B cell (primary cell): ENCODE measurements at regions of chr22 and their contacts with region 1.

Region 1: GRCh38 chr22:50525390-50526068 is at the start of gene SCO2:
- DNase-seq: peak; percentile 98
- ATAC-seq: peak; percentile 54
- H3K4me3 ChIP-seq: peak within 1 kb of the TSS; percentile 4 to 82 (median 69)
- H3K4me3 Mint-ChIP-seq: peak within 1 kb of the TSS; percentile 90
- H3K27ac ChIP-seq: peak within 1 kb of the TSS; percentile 83 to 90
- H3K27ac Mint-ChIP-seq: peak within 1 kb of the TSS; percentile 91
- H3K4me1 ChIP-seq: peaks cover 16 to 52% of the 10 kb centered on the region in 2 donors
- H3K4me1 Mint-ChIP-seq: peaks cover 34% of the 10 kb centered on the region
- H3K27me3 ChIP-seq: no peaks in the 10 kb centered on the region
- H3K27me3 Mint-ChIP-seq: no peaks in the 10 kb centered on the region
- CTCF ChIP-seq: no peak
- total RNA-seq, gene SCO2: 1.1 TPM in 2 replicates

Region 2: DNA sequence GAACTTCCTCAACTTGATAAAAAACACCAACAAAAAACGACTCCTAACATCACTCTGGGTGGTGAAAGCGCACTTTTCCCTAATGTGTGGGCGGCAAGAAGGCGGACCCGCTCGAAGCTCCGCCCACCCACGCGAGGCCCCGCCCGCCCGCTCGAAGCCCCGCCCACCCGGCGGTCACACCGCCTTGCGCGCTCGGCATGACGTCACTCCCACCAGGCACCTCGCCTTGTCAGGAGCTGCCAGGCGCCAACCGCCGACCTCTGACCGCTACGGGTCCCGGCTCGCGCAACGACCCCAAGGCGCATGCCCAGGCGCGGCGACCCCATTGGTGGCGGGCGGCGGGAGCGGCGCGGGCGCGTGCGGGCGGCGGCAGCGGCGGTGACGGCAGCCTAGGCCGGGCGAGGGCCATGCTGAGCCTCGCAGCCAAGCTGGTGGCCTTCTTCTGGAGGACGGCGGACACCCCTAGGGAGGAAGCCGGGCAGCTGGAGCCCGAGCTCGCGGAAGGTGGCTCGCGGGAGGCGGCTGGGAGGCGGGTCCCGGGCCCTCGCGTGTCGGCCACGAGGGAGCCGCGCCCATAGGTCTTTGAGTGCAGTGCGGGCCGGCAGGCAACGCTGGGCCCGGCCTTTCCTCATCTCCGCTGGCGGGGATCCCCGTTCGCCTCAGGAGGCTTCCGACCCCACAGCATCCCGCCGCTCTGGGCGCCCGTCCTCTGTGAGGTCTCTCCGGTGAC is 435.7 kb before region 1 on chr22 and contains the start of gene MOV10L1:
- CTCF ChIA-PET with region 1: no interaction called
- POLR2A ChIA-PET with region 1: no interaction called
- intact Hi-C with region 1: no loop called
- DNase-seq: no peak
- ATAC-seq: no peak
- H3K4me3 ChIP-seq: no peak within 1 kb of the TSS
- H3K4me3 Mint-ChIP-seq: no peak within 1 kb of the TSS
- H3K27ac ChIP-seq: no peak within 1 kb of the TSS
- H3K27ac Mint-ChIP-seq: no peak within 1 kb of the TSS
- H3K4me1 ChIP-seq: no peaks in the 10 kb centered on the region
- H3K4me1 Mint-ChIP-seq: peaks cover 3% of the 10 kb centered on the region
- H3K27me3 ChIP-seq: peaks cover 0 to 21% (median 3%) of the 10 kb centered on the region in 4 experiments
- H3K27me3 Mint-ChIP-seq: peaks cover 15% of the 10 kb centered on the region
- CTCF ChIP-seq: no peak
- total RNA-seq, gene MOV10L1: not detected in 2 replicates

Region 3: DNA sequence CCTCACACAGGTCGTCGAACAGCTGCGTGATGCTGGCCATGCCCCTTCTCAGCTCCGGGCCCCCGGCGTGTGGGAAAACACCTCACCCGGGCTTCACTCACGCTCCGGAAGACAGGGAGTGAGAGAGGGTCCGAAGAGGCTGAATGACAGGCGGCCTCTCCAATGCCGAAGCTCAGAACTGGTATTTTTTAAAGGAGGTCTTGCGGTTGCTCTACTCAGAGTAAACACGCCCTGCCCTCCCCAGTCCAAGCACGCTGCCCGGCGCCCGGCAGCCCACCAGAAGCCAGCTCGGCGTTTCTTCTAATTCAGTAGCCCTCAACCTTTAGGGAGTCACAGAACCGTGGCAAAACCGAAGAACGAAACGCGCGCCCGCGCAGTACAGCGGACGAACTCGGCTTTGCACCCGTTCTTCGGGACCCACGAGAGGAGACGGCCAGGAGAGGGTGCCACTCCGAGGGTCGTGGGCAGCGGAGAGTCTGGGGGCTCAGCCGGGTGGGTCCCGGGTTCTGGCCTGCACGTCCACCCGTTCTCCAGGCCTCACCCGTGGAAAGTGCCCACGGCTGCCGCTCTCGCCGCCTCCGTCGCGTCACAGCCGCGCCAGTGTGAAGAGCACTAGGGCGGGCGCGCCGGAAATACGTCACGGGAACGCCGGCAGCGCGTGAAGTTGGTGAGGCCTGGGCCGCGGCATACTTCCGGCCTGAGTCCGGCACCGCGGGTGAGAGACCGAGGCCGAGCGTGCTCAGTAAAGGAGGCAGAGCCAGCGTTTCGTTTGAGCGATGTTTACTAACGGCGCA is 280.9 kb before region 1 on chr22 and contains the start of gene TUBGCP6:
- CTCF ChIA-PET with region 1: interaction called, 18 read pairs
- POLR2A ChIA-PET with region 1: interaction called, 4 read pairs
- intact Hi-C with region 1: loop called (anchors 1 kb)
- DNase-seq: peak; percentile 96
- ATAC-seq: peak; percentile 81
- H3K4me3 ChIP-seq: peak within 1 kb of the TSS; percentile 65 to 99 (median 90)
- H3K4me3 Mint-ChIP-seq: peak within 1 kb of the TSS; percentile 96
- H3K27ac ChIP-seq: peak within 1 kb of the TSS; percentile 91 to 96
- H3K27ac Mint-ChIP-seq: peak within 1 kb of the TSS; percentile 99
- H3K4me1 ChIP-seq: peaks cover 33 to 66% of the 10 kb centered on the region in 2 donors
- H3K4me1 Mint-ChIP-seq: peaks cover 40% of the 10 kb centered on the region
- H3K27me3 ChIP-seq: no peaks in the 10 kb centered on the region
- H3K27me3 Mint-ChIP-seq: no peaks in the 10 kb centered on the region
- CTCF ChIP-seq: no peak
- total RNA-seq, gene TUBGCP6: 137 and 139 TPM in 2 replicates

Region 4: DNA sequence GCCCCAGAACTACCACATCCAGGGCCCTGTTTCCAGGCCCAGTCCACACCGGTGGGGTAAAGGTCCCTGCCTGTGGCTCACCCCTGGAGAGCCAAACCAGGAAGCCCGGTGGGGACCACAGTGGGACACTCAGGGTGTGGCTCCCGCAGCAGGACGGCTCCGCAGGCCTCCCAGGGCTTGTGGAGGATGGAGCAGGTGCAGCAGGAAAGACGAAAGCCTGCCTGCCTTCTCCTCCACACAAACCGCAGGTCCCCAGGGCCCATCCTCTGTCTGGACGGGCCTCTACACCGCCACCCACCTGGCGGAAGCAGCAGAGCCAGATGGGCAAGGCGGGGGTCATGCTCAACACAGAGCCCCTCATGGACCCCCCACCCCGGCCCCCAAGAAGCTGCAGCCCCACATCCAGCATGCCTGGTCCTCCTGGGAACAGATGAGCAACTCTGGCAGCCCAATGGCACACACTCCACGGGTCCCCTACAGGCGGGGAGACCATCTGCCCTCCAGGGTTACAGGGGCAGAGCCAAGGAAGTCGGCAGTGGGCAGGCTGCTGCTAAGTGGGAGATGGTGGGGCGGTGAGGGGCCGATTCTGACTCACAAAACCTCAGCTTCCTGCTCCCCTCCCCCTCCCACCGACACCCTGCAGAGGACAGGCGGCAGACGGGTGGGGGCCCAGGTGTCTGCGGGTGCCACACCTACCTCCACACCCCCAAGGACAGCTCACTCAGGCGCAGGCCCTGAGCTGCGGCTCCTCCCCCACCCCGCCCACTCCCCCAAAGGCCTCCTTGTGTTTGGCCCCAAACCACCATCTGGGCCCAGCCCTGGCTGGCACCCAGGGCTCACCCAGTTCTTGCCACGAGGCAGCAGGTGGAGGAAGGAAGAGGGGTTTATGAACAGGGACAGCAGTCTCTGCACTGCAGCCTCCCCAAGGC is 55.9 kb before region 1 on chr22:
- CTCF ChIA-PET with region 1: interaction called, 20 read pairs
- POLR2A ChIA-PET with region 1: interaction called, 22 read pairs
- intact Hi-C with region 1: loop called (anchors 5 kb)
- DNase-seq: peak; percentile 96
- ATAC-seq: peak; percentile 79
- H3K4me3 ChIP-seq: peak overlapping the region in 4 of 5 experiments; percentile 1 to 39 (median 29)
- H3K4me3 Mint-ChIP-seq: peak overlapping the region; percentile 83
- H3K27ac ChIP-seq: peak overlapping the region; percentile 69 to 90
- H3K27ac Mint-ChIP-seq: peak overlapping the region; percentile 96
- H3K4me1 ChIP-seq: peaks cover 60 to 66% of the 10 kb centered on the region in 2 donors
- H3K4me1 Mint-ChIP-seq: peaks cover 69% of the 10 kb centered on the region
- H3K27me3 ChIP-seq: no peaks in the 10 kb centered on the region
- H3K27me3 Mint-ChIP-seq: no peaks in the 10 kb centered on the region
- CTCF ChIP-seq: peak; percentile 31

Region 5: GRCh38 chr22:50498322-50498890 is 27.1 kb before region 1 on chr22:
- CTCF ChIA-PET with region 1: interaction called, 28 read pairs
- POLR2A ChIA-PET with region 1: no interaction called
- intact Hi-C with region 1: no loop called
- DNase-seq: peak; percentile 80
- ATAC-seq: peak; percentile 94
- H3K4me3 ChIP-seq: no peak overlapping the region
- H3K4me3 Mint-ChIP-seq: no peak overlapping the region
- H3K27ac ChIP-seq: no peak overlapping the region
- H3K27ac Mint-ChIP-seq: no peak overlapping the region
- H3K4me1 ChIP-seq: peaks cover 3 to 10% of the 10 kb centered on the region in 2 donors
- H3K4me1 Mint-ChIP-seq: peaks cover 4% of the 10 kb centered on the region
- H3K27me3 ChIP-seq: no peaks in the 10 kb centered on the region
- H3K27me3 Mint-ChIP-seq: no peaks in the 10 kb centered on the region
- CTCF ChIP-seq: peak; percentile 73

Region 6: GRCh38 chr22:50537765-50538164 is 12.2 kb after region 1 on chr22:
- CTCF ChIA-PET with region 1: interaction called, 81 read pairs
- POLR2A ChIA-PET with region 1: interaction called, 104 read pairs
- intact Hi-C with region 1: no loop called
- DNase-seq: no peak
- ATAC-seq: no peak
- H3K4me3 ChIP-seq: no peak overlapping the region
- H3K4me3 Mint-ChIP-seq: peak overlapping the region; percentile 56
- H3K27ac ChIP-seq: peak overlapping the region; percentile 95 to 96
- H3K27ac Mint-ChIP-seq: peak overlapping the region; percentile 92
- H3K4me1 ChIP-seq: peaks cover 39 to 72% of the 10 kb centered on the region in 2 donors
- H3K4me1 Mint-ChIP-seq: peaks cover 68% of the 10 kb centered on the region
- H3K27me3 ChIP-seq: no peaks in the 10 kb centered on the region
- H3K27me3 Mint-ChIP-seq: no peaks in the 10 kb centered on the region
- CTCF ChIP-seq: no peak

Region 7: DNA sequence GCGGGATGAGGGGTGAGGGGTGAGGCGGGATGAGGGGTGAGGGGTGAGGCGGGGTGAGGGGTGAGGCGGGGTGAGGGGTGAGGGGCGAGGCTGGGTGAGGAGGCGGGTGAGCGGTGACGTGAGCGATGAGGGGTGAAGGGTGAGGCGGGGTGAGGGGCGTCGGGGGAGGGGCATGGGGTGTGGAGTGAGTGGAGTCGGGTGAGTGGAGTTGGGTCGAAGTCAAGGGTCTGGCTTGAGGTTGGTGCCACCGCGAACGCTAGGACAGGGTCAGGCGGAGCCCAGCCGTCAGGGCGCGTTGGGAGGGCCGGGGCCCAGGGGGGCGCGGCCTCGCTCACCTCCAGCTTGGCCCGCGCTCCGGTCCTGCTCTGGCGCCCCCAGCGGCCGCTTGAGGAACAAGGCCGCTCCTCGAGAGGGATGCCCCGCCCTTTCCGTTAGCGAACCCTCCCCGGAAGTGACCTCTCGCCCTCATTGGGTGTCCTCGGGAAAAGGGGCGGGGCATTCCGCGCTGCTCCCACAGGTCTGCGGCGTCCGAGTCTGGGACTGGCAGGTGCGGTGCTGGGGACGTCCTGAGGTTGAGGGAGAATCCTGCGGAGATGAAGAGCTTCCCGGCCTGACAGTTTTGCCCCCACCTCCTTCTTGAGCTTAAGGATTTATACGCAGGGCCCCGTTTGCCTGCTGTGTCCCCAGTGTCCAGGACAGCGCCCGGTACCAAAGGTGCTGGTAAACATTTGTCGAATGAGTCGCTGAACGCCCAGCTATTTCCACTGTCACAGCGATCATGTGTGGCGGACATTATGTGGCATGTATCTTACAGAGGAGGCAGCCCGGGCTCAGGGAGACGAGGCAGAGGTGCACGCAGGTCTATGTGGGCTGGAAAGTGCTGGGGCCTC is 37.2 kb after region 1 on chr22 and contains the start of gene SYCE3:
- CTCF ChIA-PET with region 1: interaction called, 54 read pairs
- POLR2A ChIA-PET with region 1: interaction called, 32 read pairs
- intact Hi-C with region 1: loop called (anchors 1 kb)
- DNase-seq: peak; percentile 97
- ATAC-seq: peak; percentile 96
- H3K4me3 ChIP-seq: peak within 1 kb of the TSS; percentile 5 to 83 (median 72)
- H3K4me3 Mint-ChIP-seq: peak within 1 kb of the TSS; percentile 87
- H3K27ac ChIP-seq: peak within 1 kb of the TSS in 1 of 2 donors; percentile 37
- H3K27ac Mint-ChIP-seq: peak within 1 kb of the TSS; percentile 87
- H3K4me1 ChIP-seq: peaks cover 5 to 9% of the 10 kb centered on the region in 2 donors
- H3K4me1 Mint-ChIP-seq: peaks cover 16% of the 10 kb centered on the region
- H3K27me3 ChIP-seq: no peaks in the 10 kb centered on the region
- H3K27me3 Mint-ChIP-seq: no peaks in the 10 kb centered on the region
- CTCF ChIP-seq: peak; percentile 89
- total RNA-seq, gene SYCE3: not detected in 2 replicates